ENCODE measurements at regions of chr12 and their contacts with region 1.

Region 1: GRCh38 chr12:95117178-95117599 is 43.8 kb upstream of the NR2C1 start:
- DNase-seq: peak in 1 of 3 donors; percentile 87
- ATAC-seq: peak; percentile 85
- H3K4me3 ChIP-seq: no peak overlapping the region
- H3K4me1 ChIP-seq: no peaks in the 10 kb centered on the region
- CTCF ChIP-seq: peak; percentile 21

Region 2: GRCh38 chr12:95336390-95337067 is 219.3 kb after region 1 on chr12:
- intact Hi-C with region 1: loop called in 1 of 2 experiments (anchors 5 kb)
- DNase-seq: peak in 2 of 3 donors; percentile 59 to 71
- ATAC-seq: peak; percentile 91
- H3K4me3 ChIP-seq: no peak overlapping the region
- H3K4me1 ChIP-seq: no peaks in the 10 kb centered on the region
- CTCF ChIP-seq: no peak

Region 3: GRCh38 chr12:95532851-95533250 is 415.7 kb after region 1 on chr12:
- intact Hi-C with region 1: loop called in 1 of 2 experiments (anchors 5 kb)
- DNase-seq: peak in 1 of 3 donors; percentile 8
- ATAC-seq: peak; percentile 28
- H3K4me3 ChIP-seq: no peak overlapping the region
- H3K4me1 ChIP-seq: peaks cover 5% of the 10 kb centered on the region
- CTCF ChIP-seq: no peak

Measured in mucosa of descending colon (tissue), 3 donors.